ENCODE measurements at regions of chr10 and their contacts with region 1.

Region 1: DNA sequence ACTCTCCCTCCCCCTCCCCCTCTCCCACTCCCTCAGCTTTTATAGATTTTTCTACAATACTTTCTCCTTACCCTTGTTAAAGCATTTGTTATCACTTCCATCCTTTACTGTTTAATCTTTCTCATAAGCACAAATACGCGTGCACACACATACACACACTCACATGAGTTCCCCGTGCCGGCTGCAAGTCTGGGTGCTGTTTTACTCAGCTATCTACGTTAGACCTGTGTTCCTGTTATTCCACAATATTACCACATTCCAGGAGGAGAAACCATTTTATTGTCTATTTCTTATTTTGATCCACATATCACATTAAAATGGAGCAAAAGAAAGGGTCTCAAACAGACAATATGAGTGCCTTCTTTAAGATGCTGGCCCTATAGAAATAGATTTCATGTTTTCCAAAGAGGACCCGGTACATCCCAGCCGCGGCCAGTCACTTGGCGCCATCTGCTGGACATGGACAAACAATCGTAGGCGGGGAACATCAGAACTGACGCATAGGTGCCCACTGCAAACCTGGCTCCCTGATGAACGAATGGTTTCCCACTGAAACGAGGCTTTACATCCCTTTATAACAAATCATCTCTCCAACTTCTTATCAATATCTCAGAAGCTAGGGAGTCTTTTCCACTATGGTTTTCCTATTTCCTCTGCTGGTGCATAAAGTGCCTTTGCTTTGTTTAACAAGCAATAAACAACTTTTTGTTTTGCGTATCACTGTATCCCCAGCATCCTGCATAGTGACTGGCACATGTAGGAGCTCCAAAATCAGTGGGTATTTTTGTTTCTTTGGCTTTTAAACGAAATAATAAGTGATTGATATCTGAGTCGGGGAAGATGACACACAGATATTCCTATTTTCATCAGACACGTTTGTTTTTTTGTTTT is 25.2 kb upstream of the OPTN start:
- ATAC-seq: peak; percentile 85 to 100 (median 94)
- H3K4me3 ChIP-seq: no peak overlapping the region
- H3K27ac ChIP-seq: no peak overlapping the region
- H3K4me1 ChIP-seq: no peaks in the 10 kb centered on the region

Region 2: GRCh38 chr10:12729885-12730284 is 344.9 kb before region 1 on chr10:
- in situ Hi-C with region 1: loop called in 1 of 9 experiments (anchors 25 kb)
- ATAC-seq: peak in 2 of 8 experiments; percentile 21 to 25
- H3K4me3 ChIP-seq: no peak overlapping the region
- H3K27ac ChIP-seq: no peak overlapping the region
- H3K4me1 ChIP-seq: peaks cover 21 to 29% of the 10 kb centered on the region in 2 donors

Region 3: DNA sequence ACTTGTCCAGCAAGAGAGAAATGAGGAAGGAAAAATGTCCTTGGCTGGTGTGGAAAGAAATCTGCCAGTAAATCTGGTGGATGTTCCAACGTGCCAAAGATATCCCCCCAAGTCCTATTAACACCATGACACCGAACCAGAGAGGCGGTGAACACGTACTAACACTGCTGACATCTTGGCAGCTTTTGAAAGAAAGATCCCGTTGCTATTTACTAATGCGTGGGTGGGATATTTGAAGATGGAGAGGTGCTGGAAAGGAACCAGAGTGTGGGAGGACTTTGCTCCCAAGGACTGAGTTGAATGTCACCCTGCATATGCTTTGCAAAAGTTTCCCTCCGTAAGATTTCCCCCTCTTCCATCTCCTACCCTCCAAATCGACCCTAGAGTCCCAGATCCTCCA is 81.2 kb before region 1 on chr10:
- in situ Hi-C with region 1: no loop called
- ATAC-seq: peak in 1 of 8 experiments; percentile 50
- H3K4me3 ChIP-seq: no peak overlapping the region
- H3K27ac ChIP-seq: no peak overlapping the region
- H3K4me1 ChIP-seq: no peaks in the 10 kb centered on the region

Measured in motor neuron (in vitro differentiated cells).